ENCODE measurements at regions of chr1 and their contacts with region 1.

Region 1: GRCh38 chr1:192477630-192478029 is 97.9 kb upstream of the RGS1 start:
- DNase-seq: peak; percentile 63
- H3K4me3 Mint-ChIP-seq: no peak overlapping the region
- H3K27ac Mint-ChIP-seq: no peak overlapping the region
- H3K4me1 Mint-ChIP-seq: peaks cover 8% of the 10 kb centered on the region
- H3K27me3 Mint-ChIP-seq: no peaks in the 10 kb centered on the region
- CTCF ChIP-seq: peak; percentile 75

Region 2: DNA sequence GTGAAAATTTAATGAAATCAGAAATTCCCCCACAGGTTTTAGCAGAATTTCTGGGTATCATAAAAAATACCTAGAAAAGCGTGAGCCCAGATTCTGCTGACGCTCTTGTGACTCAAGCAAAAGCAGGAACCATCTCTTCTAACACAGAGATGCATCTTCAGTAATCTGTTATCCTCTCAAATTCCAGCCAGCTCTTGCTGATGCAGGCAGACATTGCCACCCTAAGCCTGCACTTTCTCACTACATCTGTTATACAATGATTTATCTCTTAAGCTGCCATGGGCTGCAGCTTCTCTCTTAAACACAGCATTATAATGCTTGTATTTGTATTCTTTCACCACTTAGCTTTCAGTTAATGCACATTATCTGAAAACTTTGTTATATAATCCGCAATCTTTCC is 15.0 kb before region 1 on chr1:
- CTCF ChIA-PET with region 1: interaction called, 27 read pairs
- POLR2A ChIA-PET with region 1: no interaction called
- intact Hi-C with region 1: no loop called
- DNase-seq: no peak
- H3K4me3 Mint-ChIP-seq: no peak overlapping the region
- H3K27ac Mint-ChIP-seq: no peak overlapping the region
- H3K4me1 Mint-ChIP-seq: no peaks in the 10 kb centered on the region
- H3K27me3 Mint-ChIP-seq: no peaks in the 10 kb centered on the region
- CTCF ChIP-seq: no peak

Region 3: DNA sequence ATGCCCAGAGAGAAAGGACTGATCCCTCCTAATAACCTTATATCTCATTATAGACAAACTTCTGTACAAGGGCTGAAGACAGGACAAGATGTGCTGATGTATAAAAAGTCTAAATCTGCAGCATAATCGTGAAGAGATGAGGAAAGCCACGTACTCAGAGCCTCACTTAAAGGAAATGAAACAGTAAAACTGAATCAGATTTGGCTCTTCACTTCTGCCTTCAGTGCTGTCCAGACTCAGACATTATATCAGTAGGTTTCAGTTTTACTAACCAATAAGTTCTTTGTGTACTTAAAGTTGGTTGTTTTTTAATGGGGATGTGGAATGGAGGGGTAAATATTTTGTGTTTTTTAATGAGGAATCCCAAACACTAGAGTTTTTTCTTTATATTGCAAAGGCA is 52.6 kb after region 1 on chr1:
- CTCF ChIA-PET with region 1: no interaction called
- POLR2A ChIA-PET with region 1: no interaction called
- intact Hi-C with region 1: no loop called
- DNase-seq: no peak
- H3K4me3 Mint-ChIP-seq: no peak overlapping the region
- H3K27ac Mint-ChIP-seq: no peak overlapping the region
- H3K4me1 Mint-ChIP-seq: peaks cover 19% of the 10 kb centered on the region
- H3K27me3 Mint-ChIP-seq: no peaks in the 10 kb centered on the region
- CTCF ChIP-seq: no peak

Region 4: DNA sequence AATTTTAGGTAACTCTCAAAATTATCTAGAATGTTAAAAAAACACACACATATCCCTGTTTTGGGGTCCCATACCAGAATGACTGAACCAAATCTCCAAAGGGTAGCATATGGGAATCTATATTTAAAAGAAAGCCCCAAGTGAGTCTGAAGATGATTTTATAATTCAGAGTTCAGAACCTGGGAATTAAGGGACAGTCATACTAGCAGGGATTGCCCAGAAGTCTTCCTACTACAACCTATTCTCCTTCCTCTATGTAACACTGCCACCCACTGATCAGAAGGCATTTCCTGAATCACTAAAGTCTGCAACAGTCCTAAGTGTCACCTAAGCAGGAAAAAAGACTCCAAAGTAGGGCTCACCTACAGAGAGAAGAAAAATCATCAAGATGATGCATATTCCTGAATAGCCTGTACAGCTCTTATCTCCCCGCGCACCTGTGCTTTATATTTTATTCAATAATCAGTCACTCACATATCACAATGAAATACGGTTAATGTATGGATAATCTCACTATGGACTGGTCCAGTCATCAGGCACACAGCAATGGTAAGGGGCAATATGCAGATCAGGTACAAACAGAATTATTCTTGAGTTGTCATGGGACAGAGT is 102.8 kb after region 1 on chr1:
- CTCF ChIA-PET with region 1: interaction called, 152 read pairs
- POLR2A ChIA-PET with region 1: interaction called, 11 read pairs
- intact Hi-C with region 1: loop called (anchors 1 kb)
- DNase-seq: peak; percentile 72
- H3K4me3 Mint-ChIP-seq: no peak overlapping the region
- H3K27ac Mint-ChIP-seq: no peak overlapping the region
- H3K4me1 Mint-ChIP-seq: peaks cover 6% of the 10 kb centered on the region
- H3K27me3 Mint-ChIP-seq: no peaks in the 10 kb centered on the region
- CTCF ChIP-seq: peak; percentile 74

Region 5: DNA sequence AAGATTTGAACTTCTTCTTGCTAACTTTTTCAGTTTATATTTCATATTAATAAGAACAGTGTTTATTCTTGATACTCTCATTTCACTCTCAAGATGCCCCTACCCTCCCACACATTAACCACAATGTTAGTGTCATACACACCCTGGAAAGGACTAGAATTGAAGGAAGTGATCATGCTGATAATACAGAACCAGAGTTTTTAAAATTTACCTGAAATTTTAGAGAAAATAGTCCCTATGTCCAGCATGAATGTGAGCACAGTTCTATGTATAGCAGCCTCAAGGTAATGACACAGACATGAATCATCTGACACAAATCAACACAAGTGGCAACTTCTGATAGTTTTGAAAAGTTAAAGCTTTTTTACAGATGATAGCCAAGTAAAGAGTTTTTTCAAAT is 123.9 kb after region 1 on chr1:
- CTCF ChIA-PET with region 1: interaction called, 43 read pairs
- POLR2A ChIA-PET with region 1: interaction called, 6 read pairs
- intact Hi-C with region 1: no loop called
- DNase-seq: peak; percentile 50
- H3K4me3 Mint-ChIP-seq: no peak overlapping the region
- H3K27ac Mint-ChIP-seq: no peak overlapping the region
- H3K4me1 Mint-ChIP-seq: peaks cover 15% of the 10 kb centered on the region
- H3K27me3 Mint-ChIP-seq: no peaks in the 10 kb centered on the region
- CTCF ChIP-seq: no peak

Region 6: DNA sequence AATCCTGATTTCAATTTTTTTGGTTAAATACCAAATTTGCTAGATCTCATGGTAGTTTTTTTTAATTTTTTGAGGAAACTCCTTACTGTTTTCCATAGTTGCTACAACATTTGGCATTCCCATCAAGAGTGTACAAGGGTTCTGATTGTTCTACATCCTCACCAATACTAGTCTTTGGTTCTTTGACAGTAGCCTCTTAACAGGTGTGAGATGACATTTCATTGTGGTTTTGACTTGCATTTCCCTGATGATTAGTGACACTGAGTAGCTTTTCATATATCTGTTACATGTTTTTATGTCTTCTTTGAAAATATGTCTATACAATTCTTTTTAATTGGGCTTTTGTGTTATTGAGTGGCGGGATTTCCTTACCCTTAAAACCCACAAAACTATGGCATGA is 137.4 kb after region 1 on chr1:
- CTCF ChIA-PET with region 1: interaction called, 98 read pairs
- POLR2A ChIA-PET with region 1: interaction called, 5 read pairs
- intact Hi-C with region 1: loop called (anchors 1 kb)
- DNase-seq: no peak
- H3K4me3 Mint-ChIP-seq: no peak overlapping the region
- H3K27ac Mint-ChIP-seq: no peak overlapping the region
- H3K4me1 Mint-ChIP-seq: no peaks in the 10 kb centered on the region
- H3K27me3 Mint-ChIP-seq: no peaks in the 10 kb centered on the region
- CTCF ChIP-seq: no peak

Region 7: DNA sequence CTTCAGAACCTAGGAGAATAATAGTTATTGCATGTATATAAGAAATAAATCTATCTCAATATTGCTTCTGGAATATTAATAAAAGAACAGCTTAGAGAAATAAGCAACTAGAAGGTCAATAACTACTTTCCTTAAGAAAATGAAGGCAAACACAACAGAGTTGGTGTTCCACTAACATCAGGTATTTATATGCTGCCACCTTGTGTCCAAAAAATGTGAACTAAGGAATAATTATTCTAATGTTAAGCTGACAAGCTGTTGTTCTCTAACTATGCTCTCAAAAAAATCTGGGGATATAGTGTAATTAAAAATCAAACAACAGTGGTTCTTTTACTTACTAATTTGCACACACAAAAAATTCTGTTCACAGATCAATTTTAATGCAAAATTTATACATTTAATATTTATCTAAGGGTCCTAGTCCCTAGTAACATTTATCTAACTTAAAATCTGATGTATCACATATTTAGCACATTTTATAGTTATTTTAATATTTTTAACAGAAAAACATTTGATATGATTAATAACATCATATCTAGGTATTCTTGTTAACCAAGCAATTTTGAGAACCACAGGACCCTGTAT is 541.9 kb after region 1 on chr1:
- CTCF ChIA-PET with region 1: interaction called, 28 read pairs
- POLR2A ChIA-PET with region 1: interaction called, 3 read pairs
- intact Hi-C with region 1: loop called (anchors 1 kb)
- DNase-seq: peak; percentile 76
- H3K4me3 Mint-ChIP-seq: no peak overlapping the region
- H3K27ac Mint-ChIP-seq: peak overlapping the region; percentile 31
- H3K4me1 Mint-ChIP-seq: no peaks in the 10 kb centered on the region
- H3K27me3 Mint-ChIP-seq: no peaks in the 10 kb centered on the region
- CTCF ChIP-seq: peak; percentile 59

Region 8: GRCh38 chr1:193031438-193031837 is 553.8 kb after region 1 on chr1:
- CTCF ChIA-PET with region 1: interaction called, 28 read pairs
- POLR2A ChIA-PET with region 1: interaction called, 3 read pairs
- intact Hi-C with region 1: loop called (anchors 2 kb)
- DNase-seq: peak; percentile 31
- H3K4me3 Mint-ChIP-seq: no peak overlapping the region
- H3K27ac Mint-ChIP-seq: no peak overlapping the region
- H3K4me1 Mint-ChIP-seq: no peaks in the 10 kb centered on the region
- H3K27me3 Mint-ChIP-seq: no peaks in the 10 kb centered on the region
- CTCF ChIP-seq: peak; percentile 54

Measured in MCF 10A (cell line).